Psoas muscle (tissue), 8 donors: ENCODE measurements at regions of chr14 and their contacts with region 1.

Region 1: GRCh38 chr14:98008381-98009113 is 1211.4 kb downstream of the VRK1 start:
- DNase-seq: no peak
- ATAC-seq: no peak
- H3K4me3 ChIP-seq: no peak overlapping the region
- H3K27ac ChIP-seq: no peak overlapping the region
- H3K4me1 ChIP-seq: no peaks in the 10 kb centered on the region
- H3K27me3 ChIP-seq: no peaks in the 10 kb centered on the region
- CTCF ChIP-seq: no peak

Region 2: DNA sequence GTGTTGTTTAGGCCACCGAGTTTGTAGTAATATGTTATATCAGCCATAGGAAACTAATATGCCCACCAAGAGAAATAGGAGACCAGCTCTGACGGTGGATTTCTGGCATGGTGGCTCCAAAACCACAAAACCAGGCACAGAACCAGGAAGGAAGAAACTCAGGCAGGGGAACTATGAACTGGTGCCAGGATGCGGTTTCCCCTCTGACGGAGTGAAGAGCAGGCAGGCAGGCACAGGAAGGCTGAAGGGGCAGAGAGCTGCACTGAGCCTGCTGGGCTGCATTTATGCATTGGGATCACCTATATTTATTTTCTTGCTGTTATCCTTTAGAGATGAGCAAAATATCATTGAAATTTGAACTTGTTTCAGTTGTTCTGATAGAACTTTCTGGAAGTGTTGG is 732.0 kb before region 1 on chr14:
- intact Hi-C with region 1: loop called in 1 of 2 experiments (anchors 10 kb)
- DNase-seq: no peak
- ATAC-seq: no peak
- H3K4me3 ChIP-seq: no peak overlapping the region
- H3K27ac ChIP-seq: no peak overlapping the region
- H3K4me1 ChIP-seq: no peaks in the 10 kb centered on the region
- H3K27me3 ChIP-seq: no peaks in the 10 kb centered on the region
- CTCF ChIP-seq: no peak